HepG2 (cell line): ENCODE measurements at regions of chr9 and their contacts with region 1.

Region 1: GRCh38 chr9:90142580-90142979 is 500.0 kb downstream of the DIRAS2 start:
- DNase-seq: peak; percentile 35
- ATAC-seq: no peak
- H3K4me3 ChIP-seq: no peak overlapping the region
- H3K27ac ChIP-seq: no peak overlapping the region
- H3K4me1 ChIP-seq: no peaks in the 10 kb centered on the region
- H3K27me3 ChIP-seq: peaks cover 0 to 7% of the 10 kb centered on the region in 2 experiments; a peak in 1 of 5 replicates
- CTCF ChIP-seq: peak; percentile 53
- EP300 ChIP-seq: no peak
- POLR2A ChIP-seq: no peak
- RAD21 ChIP-seq: no peak

Region 2: DNA sequence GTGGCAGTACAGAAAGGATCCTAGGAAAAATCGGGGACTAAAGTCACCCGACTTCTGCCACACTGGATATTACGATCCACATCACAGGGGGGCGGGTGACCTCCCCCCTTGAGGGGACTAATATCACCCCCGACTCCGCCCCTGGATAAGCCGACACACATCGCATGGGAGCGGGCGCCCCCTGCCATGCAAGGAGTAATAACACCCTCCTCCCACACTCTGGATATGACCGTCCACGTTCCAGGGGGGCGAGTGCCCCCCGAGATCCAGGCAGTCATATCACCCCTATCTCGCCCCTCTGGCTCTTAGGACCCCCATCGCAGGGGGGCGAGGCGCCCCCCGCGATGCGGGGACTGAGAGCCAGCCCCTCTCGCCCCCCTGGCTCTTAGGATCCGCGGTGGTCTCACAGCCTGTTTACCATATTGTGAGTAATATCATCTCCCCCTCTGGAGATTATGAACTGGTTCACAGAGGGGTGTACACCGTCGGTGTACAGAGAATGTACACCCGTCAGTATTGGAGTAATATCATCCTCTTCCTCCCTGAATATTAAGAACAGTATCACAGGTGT is 77.1 kb after region 1 on chr9:
- CTCF ChIA-PET with region 1: interaction called, 12 read pairs
- POLR2A ChIA-PET with region 1: no interaction called
- in situ Hi-C with region 1: loop called (anchors 5 kb)
- intact Hi-C with region 1: no loop called
- DNase-seq: peak; percentile 6
- ATAC-seq: peak; percentile 81
- H3K4me3 ChIP-seq: no peak overlapping the region
- H3K27ac ChIP-seq: no peak overlapping the region
- H3K4me1 ChIP-seq: no peaks in the 10 kb centered on the region
- H3K27me3 ChIP-seq: peaks cover 1 to 3% of the 10 kb centered on the region in 2 experiments; a peak in 2 of 5 replicates
- CTCF ChIP-seq: peak; percentile 69
- EP300 ChIP-seq: no peak
- POLR2A ChIP-seq: no peak
- RAD21 ChIP-seq: peak; percentile 41

Region 3: DNA sequence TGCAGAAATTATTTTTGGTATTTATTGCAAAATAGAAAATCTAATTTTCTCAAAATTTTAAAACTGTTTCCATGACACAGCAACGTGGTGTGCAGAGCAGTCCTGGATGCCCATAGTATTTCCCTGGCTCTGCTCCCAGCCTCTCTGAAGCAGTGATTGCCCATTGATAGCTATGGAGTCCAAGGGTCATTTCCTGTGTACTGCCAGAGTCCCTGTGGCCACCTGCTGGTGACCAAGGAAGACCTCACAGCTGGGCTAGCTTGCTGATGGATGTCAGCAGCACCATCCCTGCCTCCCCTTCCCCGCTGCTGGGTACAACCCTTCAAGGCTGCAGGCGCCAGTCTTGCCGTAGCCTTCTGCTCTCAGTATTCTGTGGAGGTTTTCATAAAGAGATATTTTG is 315.9 kb after region 1 on chr9:
- CTCF ChIA-PET with region 1: interaction called, 3 read pairs
- POLR2A ChIA-PET with region 1: no interaction called
- in situ Hi-C with region 1: no loop called
- intact Hi-C with region 1: loop called (anchors 1 kb)
- DNase-seq: peak; percentile 78
- ATAC-seq: peak; percentile 100
- H3K4me3 ChIP-seq: no peak overlapping the region
- H3K27ac ChIP-seq: no peak overlapping the region
- H3K4me1 ChIP-seq: 0 out of 2 replicates have a peak, but pooled peaks cover 6% of the 10 kb centered on the region
- H3K27me3 ChIP-seq: no peaks in the 10 kb centered on the region
- CTCF ChIP-seq: peak; percentile 84
- EP300 ChIP-seq: no peak
- POLR2A ChIP-seq: no peak
- RAD21 ChIP-seq: peak; percentile 66

Region 4: DNA sequence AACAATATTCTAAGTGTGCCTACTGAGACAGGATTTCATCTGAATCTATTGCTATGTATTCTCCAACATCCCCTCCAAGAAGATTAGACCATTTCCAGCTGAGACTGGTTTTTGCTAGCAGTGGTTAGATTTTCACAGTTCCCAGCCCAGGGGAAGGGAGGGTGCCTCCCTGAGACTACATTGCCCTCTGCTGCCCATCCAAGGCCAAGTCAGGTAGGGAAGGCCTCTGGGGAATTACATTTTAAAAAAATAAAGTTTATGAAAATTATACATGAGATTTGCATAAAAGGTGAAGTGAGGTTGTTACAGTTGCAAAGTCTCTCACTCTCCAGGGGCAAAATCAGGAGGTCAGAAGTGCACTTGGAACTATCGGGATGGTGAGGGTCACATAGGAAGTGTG is 631.0 kb after region 1 on chr9:
- CTCF ChIA-PET with region 1: no interaction called
- POLR2A ChIA-PET with region 1: no interaction called
- in situ Hi-C with region 1: loop called (anchors 25 kb)
- intact Hi-C with region 1: no loop called
- DNase-seq: no peak
- ATAC-seq: peak; percentile 49; the same call in 2 of the 3 replicates
- H3K4me3 ChIP-seq: no peak overlapping the region
- H3K27ac ChIP-seq: no peak overlapping the region
- H3K4me1 ChIP-seq: no peaks in the 10 kb centered on the region
- H3K27me3 ChIP-seq: no peaks in the 10 kb centered on the region; a peak in 1 of 5 replicates
- CTCF ChIP-seq: peak; percentile 44
- EP300 ChIP-seq: no peak
- POLR2A ChIP-seq: no peak
- RAD21 ChIP-seq: no peak

Region 5: DNA sequence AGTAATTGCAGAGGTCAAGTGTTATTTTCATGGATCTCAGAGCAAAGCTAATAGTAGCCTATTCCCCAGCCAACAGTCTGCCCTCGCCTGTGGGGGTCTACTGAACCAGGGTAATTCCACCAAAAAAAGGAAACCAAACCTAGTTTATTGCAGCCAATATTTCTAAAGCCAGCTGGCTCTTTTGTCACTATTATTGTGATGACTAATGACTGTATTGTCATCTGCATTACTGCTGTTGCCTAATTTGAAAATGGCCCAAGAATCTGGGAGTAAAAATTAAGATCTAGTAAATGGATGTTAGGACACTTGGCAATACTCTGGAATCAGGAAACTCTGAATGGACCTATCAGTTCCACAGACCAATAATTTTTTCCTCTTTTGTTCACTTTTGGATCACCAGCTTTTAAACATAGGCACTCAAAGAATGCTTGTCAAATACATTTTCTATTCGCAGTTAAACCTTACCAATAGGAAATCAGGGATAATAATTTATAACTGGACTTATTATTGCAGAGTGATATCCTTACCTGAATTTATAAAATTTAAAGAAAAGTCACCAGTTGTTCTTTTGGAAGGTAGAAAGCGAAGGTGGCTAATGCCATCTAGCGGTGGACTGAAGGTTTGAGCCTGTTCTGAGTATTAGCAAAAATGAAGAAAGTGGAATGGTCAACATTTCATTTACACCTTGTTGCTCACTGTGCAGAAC is 728.2 kb after region 1 on chr9:
- CTCF ChIA-PET with region 1: interaction called, 22 read pairs
- POLR2A ChIA-PET with region 1: no interaction called
- in situ Hi-C with region 1: loop called (anchors 10 kb)
- intact Hi-C with region 1: loop called (anchors 2 kb)
- DNase-seq: peak; percentile 25
- ATAC-seq: no peak
- H3K4me3 ChIP-seq: no peak overlapping the region
- H3K27ac ChIP-seq: no peak overlapping the region
- H3K4me1 ChIP-seq: no peaks in the 10 kb centered on the region
- H3K27me3 ChIP-seq: peaks cover 0 to 6% of the 10 kb centered on the region in 2 experiments; a peak in 1 of 5 replicates
- CTCF ChIP-seq: peak; percentile 71
- EP300 ChIP-seq: no peak
- POLR2A ChIP-seq: no peak
- RAD21 ChIP-seq: no peak